Gastrocnemius medialis (tissue), 4 donors: ENCODE measurements at regions of chr3 and their contacts with region 1.

Region 1: DNA sequence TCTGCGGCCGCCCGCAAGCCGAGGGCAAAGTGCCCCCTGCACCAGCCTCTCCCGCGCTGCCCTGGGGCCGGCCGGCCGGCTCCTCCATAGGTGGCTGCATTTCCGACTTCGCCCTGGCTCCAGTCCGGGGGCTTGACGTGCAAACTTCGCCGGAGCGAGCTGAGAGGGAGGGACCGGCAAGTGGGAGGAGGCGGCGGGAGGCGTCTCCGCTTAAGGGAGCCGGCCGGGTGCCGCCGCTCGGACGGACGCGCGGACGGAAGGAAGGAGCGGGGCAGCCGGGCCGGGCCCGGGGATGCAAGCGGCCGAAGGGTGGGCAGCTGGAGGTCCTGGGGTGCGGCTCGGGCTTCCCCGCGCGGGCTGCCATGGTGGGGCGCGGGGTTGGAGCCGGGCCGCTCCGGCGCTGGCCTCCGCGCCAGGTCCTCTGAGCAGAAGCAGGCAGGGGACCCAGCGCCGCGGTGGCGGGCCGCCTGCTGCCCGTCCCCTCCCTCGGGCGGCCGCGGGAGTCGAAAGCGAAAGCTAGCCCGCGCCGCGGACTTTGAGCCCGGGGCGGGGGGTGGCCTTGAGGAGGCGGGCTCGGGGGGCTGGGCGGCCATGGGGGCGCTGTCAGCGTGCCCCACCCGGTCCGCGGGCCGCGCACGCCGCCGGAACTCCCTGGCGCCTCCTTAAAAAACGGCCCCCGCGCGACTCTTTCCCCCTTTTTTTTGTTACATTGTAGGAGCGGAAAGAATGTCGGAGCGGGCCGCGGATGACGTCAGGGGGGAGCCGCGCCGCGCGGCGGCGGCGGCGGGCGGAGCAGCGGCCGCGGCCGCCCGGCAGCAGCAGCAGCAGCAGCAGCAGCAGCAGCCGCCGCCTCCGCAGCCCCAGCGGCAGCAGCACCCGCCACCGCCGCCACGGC is at the start of gene SCAANT1:
- DNase-seq: peak; percentile 84 to 89
- ATAC-seq: peak; percentile 91 to 92
- H3K4me3 ChIP-seq: peak within 1 kb of the TSS; percentile 76 to 90 (median 82)
- H3K27ac ChIP-seq: peak within 1 kb of the TSS; percentile 82 to 98 (median 88)
- H3K4me1 ChIP-seq: peaks cover 27 to 32% of the 10 kb centered on the region in 2 donors
- H3K27me3 ChIP-seq: no peaks in the 10 kb centered on the region
- CTCF ChIP-seq: peak in 3 of 5 experiments; percentile 17 to 34 (median 19)
- POLR2A ChIP-seq: peak; percentile 54 to 73
- total RNA-seq, gene SCAANT1: not detected

Region 2: DNA sequence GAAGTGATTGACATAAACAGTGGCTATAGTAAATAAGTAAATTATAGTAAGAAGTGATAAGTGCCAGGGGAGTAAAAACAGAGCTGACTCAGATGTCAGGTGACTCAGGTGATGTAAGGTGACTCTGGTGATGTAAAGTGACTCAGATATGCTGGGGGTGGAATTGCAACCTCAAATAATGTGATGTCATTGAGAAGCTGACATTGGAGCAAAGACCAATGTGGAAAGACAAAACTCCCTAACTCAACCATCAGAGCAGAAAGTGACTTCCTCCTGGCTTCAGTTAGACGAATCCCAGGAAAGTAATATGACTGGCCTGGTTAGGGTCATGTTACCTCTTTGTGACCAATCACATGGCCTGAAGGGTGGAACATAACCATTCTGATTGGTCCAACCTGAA is 403.8 kb before region 1 on chr3:
- in situ Hi-C with region 1: no loop called
- intact Hi-C with region 1: no loop called
- DNase-seq: no peak
- ATAC-seq: no peak
- H3K4me3 ChIP-seq: no peak overlapping the region
- H3K27ac ChIP-seq: no peak overlapping the region
- H3K4me1 ChIP-seq: no peaks in the 10 kb centered on the region
- H3K27me3 ChIP-seq: no peaks in the 10 kb centered on the region
- CTCF ChIP-seq: no peak
- POLR2A ChIP-seq: no peak

Region 3: DNA sequence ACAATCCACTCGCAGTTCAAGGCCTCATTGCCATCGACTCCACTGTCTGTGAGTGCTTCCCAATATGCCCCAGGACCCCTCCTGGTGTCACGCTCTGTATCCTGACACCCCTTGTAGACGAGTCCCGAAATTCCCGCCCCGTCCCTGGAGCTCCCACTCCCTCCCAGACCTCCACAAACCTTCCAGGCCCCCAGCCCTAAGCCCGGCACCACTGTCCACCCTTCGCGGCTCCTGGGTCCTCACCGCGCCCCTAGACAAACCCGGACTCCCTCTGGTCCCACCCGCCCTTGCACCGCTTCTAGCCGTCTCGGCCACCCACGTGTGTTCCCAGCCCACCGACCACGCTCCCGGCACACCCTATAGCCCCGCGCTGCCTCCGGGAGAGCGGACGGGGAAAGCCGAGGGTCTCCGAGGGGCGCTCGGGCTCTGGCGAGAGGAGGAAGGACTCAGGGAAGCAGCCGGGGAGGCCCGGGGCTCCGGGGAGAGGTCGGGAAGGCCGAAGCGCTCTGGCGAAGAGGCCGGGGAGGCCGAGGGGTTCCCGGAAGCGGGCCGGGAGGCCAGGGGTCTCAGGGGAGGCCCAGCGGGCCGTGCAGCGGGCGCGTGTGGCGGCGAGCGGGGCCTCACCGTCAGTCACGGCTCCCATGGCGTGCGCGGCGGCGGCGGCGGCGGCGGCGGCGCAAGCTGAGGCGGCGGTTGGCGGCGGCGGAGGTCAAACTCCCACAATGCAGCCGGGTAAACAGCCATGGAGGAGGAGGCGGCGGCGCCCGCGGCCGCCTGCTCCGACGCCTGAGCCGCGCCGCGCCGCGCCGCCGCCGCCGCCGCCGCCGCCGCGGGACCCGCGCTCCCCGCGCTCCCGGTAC is 48.7 kb before region 1 on chr3 and contains the starts of genes ATXN7 and THOC7:
- in situ Hi-C with region 1: loop called in 1 of 4 experiments (anchors 5 kb)
- intact Hi-C with region 1: loop called (anchors 2 kb)
- DNase-seq: peak; percentile 41 to 67
- ATAC-seq: peak; percentile 88 to 91
- H3K4me3 ChIP-seq: peak within 1 kb of the TSS; percentile 90 to 100 (median 99)
- H3K27ac ChIP-seq: peak within 1 kb of the TSS; percentile 89 to 96 (median 94)
- H3K4me1 ChIP-seq: peaks cover 8 to 17% of the 10 kb centered on the region in 2 donors
- H3K27me3 ChIP-seq: no peaks in the 10 kb centered on the region
- CTCF ChIP-seq: no peak
- POLR2A ChIP-seq: peak; percentile 18 to 40
- total RNA-seq, gene ATXN7: 14.5 to 27.4 (median 23.7) TPM
- total RNA-seq, gene THOC7: 52.0 to 74.8 (median 67.6) TPM

Region 4: GRCh38 chr3:63937661-63938651 is 25.8 kb after region 1 on chr3:
- in situ Hi-C with region 1: no loop called
- intact Hi-C with region 1: loop called (anchors 2 kb)
- DNase-seq: no peak
- ATAC-seq: no peak
- H3K4me3 ChIP-seq: no peak overlapping the region
- H3K27ac ChIP-seq: no peak overlapping the region
- H3K4me1 ChIP-seq: peaks cover 36 to 38% of the 10 kb centered on the region in 2 donors
- H3K27me3 ChIP-seq: no peaks in the 10 kb centered on the region
- CTCF ChIP-seq: no peak
- POLR2A ChIP-seq: no peak